OCI-LY7 (cell line): ENCODE measurements at regions of chr20 and their contacts with region 1.

Region 1: GRCh38 chr20:362271-363254 is 15.7 kb downstream of the NRSN2 start:
- DNase-seq: peak; percentile 91
- H3K4me3 ChIP-seq: peak overlapping the region; percentile 40
- H3K27ac ChIP-seq: peak overlapping the region; percentile 67
- H3K4me1 ChIP-seq: peaks cover 70% of the 10 kb centered on the region
- CTCF ChIP-seq: peak; percentile 58

Region 2: GRCh38 chr20:103456-103855 is 259.1 kb before region 1 on chr20:
- CTCF ChIA-PET with region 1: no interaction called
- POLR2A ChIA-PET with region 1: no interaction called
- intact Hi-C with region 1: no loop called
- DNase-seq: no peak
- H3K4me3 ChIP-seq: no peak overlapping the region
- H3K27ac ChIP-seq: no peak overlapping the region
- H3K4me1 ChIP-seq: no peaks in the 10 kb centered on the region
- CTCF ChIP-seq: no peak

Region 3: GRCh38 chr20:347640-348484 is 14.7 kb before region 1 on chr20:
- CTCF ChIA-PET with region 1: no interaction called
- POLR2A ChIA-PET with region 1: no interaction called
- intact Hi-C with region 1: no loop called
- DNase-seq: peak; percentile 56
- H3K4me3 ChIP-seq: peak overlapping the region; percentile 67
- H3K27ac ChIP-seq: no peak overlapping the region
- H3K4me1 ChIP-seq: peaks cover 7% of the 10 kb centered on the region
- CTCF ChIP-seq: no peak

Region 4: GRCh38 chr20:381581-382290 is 19.2 kb after region 1 on chr20:
- CTCF ChIA-PET with region 1: interaction called, 6 read pairs
- POLR2A ChIA-PET with region 1: interaction called, 49 read pairs
- intact Hi-C with region 1: loop called (anchors 1 kb)
- DNase-seq: peak; percentile 92
- H3K4me3 ChIP-seq: peak overlapping the region; percentile 92
- H3K27ac ChIP-seq: peak overlapping the region; percentile 90
- H3K4me1 ChIP-seq: peaks cover 42% of the 10 kb centered on the region
- CTCF ChIP-seq: no peak; the same call in 1 of the 2 replicates

Region 5: GRCh38 chr20:401682-402495 is 39.3 kb after region 1 on chr20:
- CTCF ChIA-PET with region 1: interaction called, 5 read pairs
- POLR2A ChIA-PET with region 1: interaction called, 19 read pairs
- intact Hi-C with region 1: loop called (anchors 1 kb)
- DNase-seq: peak; percentile 74
- H3K4me3 ChIP-seq: peak overlapping the region; percentile 45
- H3K27ac ChIP-seq: peak overlapping the region; percentile 87
- H3K4me1 ChIP-seq: peaks cover 53% of the 10 kb centered on the region
- CTCF ChIP-seq: no peak

Region 6: DNA sequence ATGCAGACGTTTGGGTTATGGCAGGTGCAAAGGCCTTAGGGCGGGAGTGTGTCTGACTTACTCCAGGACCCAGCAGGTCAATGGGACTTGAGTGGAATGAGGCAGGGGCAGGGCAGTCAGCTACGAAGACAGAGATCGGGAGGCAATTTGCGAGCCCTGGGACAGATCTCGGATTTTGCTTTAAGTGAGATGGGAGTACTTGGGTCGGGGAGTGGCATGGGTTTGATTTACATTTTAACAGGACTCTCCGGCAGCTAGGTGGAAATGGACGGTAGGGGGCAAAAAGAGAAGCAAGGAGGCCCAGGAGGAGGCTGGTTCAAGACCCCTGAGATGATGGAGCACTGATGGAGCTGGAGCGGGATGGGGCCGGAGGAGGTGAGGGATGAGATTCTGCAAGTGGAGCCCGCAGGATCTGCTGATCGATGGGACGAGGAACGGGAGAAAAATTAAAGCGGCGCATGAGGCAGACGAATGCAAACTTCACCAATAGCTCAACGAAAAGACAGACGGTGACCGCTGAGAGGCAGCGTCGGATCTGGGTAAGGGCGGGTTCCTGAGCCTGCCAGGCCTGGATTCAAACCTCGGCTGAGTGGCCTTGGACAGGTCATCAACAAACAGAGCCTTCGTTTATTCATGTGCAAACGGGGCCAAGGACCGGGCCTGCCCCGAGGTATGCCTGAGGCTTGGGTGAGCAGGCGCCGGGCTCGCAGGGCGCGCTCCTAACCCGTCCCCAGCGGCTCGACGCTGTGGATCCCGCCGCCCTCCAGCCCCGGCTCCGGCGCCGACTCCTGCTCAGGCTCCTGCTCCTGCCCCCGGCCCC is 44.8 kb after region 1 on chr20:
- CTCF ChIA-PET with region 1: interaction called, 5 read pairs
- POLR2A ChIA-PET with region 1: interaction called, 19 read pairs
- intact Hi-C with region 1: loop called (anchors 1 kb)
- DNase-seq: peak; percentile 85
- H3K4me3 ChIP-seq: peak overlapping the region; percentile 69
- H3K27ac ChIP-seq: peak overlapping the region; percentile 84
- H3K4me1 ChIP-seq: peaks cover 51% of the 10 kb centered on the region
- CTCF ChIP-seq: peak; percentile 77